ENCODE measurements at regions of chr13 and their contacts with region 1.

Region 1: GRCh38 chr13:30114571-30115256 is 192.6 kb downstream of the KATNAL1 start:
- DNase-seq: peak; percentile 88
- H3K4me3 ChIP-seq: peak overlapping the region; percentile 52 to 82
- H3K27ac ChIP-seq: peak overlapping the region; percentile 39 to 63
- H3K4me1 ChIP-seq: peaks cover 2% of the 10 kb centered on the region
- H3K27me3 ChIP-seq: no peaks in the 10 kb centered on the region
- CTCF ChIP-seq: peak; percentile 90 to 97 (median 96)
- POLR2A ChIP-seq: peak; percentile 62

Region 2: GRCh38 chr13:28658796-28659620 is 1455.7 kb before region 1 on chr13 and contains the start of gene POMP:
- intact Hi-C with region 1: loop called (anchors 10 kb)
- DNase-seq: peak; percentile 85
- H3K4me3 ChIP-seq: peak within 1 kb of the TSS; percentile 87 to 90
- H3K27ac ChIP-seq: peak within 1 kb of the TSS; percentile 82 to 88
- H3K4me1 ChIP-seq: no peaks in the 10 kb centered on the region
- H3K27me3 ChIP-seq: no peaks in the 10 kb centered on the region
- CTCF ChIP-seq: peak in 1 of 4 experiments; percentile 6
- POLR2A ChIP-seq: peak; percentile 90
- total RNA-seq, gene POMP: 26.3 to 35.9 TPM

Region 3: DNA sequence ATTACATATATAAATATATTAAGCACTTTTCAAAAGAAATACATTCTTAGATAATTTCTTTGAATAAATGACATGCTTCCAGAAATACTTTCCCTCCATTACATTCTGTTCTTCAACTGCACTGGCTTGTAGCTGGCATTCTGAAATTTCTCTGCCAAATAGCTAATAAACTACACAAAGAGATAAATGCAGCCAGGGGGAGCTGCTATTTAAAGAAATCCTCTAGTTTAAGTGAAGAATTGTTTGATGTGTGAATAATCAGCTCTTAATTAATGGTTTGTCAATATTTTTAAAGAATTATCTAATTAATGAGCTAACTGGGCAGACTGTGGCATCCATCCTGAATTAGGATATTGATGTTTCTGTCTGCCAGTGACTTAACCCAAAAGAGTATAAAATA is 549.9 kb before region 1 on chr13:
- intact Hi-C with region 1: loop called (anchors 5 kb)
- DNase-seq: no peak
- H3K4me3 ChIP-seq: no peak overlapping the region
- H3K27ac ChIP-seq: no peak overlapping the region
- H3K4me1 ChIP-seq: peaks cover 16% of the 10 kb centered on the region
- H3K27me3 ChIP-seq: no peaks in the 10 kb centered on the region
- CTCF ChIP-seq: peak in 2 of 4 experiments; percentile 34 to 44
- POLR2A ChIP-seq: no peak

Region 4: GRCh38 chr13:29771247-29771646 is 343.5 kb before region 1 on chr13:
- intact Hi-C with region 1: loop called (anchors 2 kb)
- DNase-seq: no peak
- H3K4me3 ChIP-seq: no peak overlapping the region
- H3K27ac ChIP-seq: no peak overlapping the region
- H3K4me1 ChIP-seq: no peaks in the 10 kb centered on the region
- H3K27me3 ChIP-seq: no peaks in the 10 kb centered on the region
- CTCF ChIP-seq: peak in 3 of 4 experiments; percentile 32 to 63 (median 56)
- POLR2A ChIP-seq: no peak

Region 5: DNA sequence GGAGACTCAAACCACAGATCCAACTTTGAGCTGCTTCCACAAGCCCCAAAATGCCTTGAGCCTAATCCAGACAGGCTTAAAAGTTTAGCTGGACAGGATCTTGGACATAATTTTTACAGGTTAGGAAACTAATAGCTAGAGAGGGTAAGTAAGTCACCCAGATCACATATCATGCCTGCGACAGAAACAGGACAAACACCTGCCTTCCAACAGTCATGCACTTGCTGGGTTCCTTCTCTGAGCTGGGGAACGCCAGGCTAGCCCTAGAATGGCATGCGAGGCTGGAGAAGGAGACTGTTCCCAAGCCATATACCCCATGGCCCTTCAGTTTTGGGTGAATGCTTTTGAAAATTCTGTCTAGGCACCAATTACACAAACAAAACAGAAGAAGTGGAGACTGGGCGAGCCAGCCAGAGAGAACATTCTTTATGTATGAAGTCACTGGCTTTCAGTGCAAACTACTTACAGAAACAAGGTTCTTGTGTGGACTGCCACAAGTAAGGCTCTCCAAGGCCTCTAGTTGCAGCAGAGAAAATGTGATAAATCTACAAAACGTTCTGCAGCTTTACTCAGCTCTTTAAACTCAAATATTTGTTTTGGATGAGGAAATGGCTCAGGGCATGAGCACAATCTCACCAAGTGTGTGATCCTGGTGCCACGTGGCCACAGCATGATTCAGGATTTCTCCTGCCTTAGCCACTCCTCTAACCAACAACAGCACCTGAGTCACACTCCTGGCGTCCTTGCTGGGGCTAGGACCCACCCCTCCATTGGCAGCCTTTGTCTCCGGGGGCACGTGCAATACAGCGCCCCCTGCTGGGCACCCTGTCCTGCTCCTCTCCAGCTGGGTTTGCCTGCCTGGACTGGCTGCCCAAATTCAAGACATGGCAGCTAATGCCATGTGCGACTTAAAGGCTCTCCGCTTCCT is 190.9 kb before region 1 on chr13:
- intact Hi-C with region 1: loop called (anchors 10 kb)
- DNase-seq: peak; percentile 92
- H3K4me3 ChIP-seq: no peak overlapping the region
- H3K27ac ChIP-seq: peak overlapping the region; percentile 75 to 76
- H3K4me1 ChIP-seq: peaks cover 12% of the 10 kb centered on the region
- H3K27me3 ChIP-seq: no peaks in the 10 kb centered on the region
- CTCF ChIP-seq: peak; percentile 70 to 92 (median 80)
- POLR2A ChIP-seq: peak; percentile 21

Measured in prostate gland (tissue), 2 donors.